CD4-positive, alpha-beta memory T cell (primary cell): ENCODE measurements at regions of chr9 and their contacts with region 1.

Region 1: DNA sequence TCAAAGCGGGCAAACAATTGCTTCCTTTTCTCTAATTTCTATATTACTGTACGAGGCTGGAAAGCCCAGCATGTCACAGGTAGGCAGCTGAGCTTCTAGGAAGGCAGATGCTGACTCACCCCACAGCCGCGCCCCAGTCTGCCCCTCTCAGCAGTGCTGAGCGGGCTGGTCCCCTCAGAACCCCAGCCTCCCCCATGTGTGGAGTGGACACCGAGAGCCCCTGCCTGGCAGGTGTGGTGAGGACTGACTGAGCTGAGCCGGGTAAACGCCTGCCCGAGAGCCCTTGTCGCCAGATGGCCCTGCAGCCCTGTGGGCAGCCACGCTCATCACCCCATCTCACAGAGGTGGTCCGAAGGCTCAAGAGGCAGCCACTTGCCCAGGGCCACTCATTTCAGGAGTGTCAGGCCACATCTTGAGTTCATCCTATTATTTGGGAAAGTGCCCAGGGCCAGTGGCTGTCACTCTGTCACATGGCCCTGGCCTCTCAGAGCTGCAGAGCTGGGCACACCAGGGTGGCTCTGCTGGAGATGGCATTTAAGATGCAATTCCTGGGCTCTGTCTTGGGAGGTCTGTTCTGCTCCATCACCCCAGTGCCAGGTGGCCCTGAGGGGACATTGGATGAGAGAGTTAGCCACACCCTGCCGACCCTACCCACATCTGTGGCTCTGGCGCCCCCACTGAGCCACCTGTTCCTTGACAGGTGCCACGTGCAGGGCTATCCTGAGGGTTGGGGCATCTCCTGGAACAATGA is 12.4 kb downstream of the CARD19 start:
- DNase-seq: peak in 1 of 5 donors; percentile 44
- H3K4me3 ChIP-seq: no peak overlapping the region
- H3K4me3 Mint-ChIP-seq: peak overlapping the region in 2 of 8 donors; percentile 22 to 63
- H3K27ac ChIP-seq: peak overlapping the region; percentile 6
- H3K27ac Mint-ChIP-seq: peak overlapping the region in 4 of 7 donors; percentile 12 to 84 (median 70)
- H3K4me1 ChIP-seq: peaks cover 52% of the 10 kb centered on the region
- H3K4me1 Mint-ChIP-seq: peaks cover 26 to 60% (median 46%) of the 10 kb centered on the region in 4 donors
- H3K27me3 ChIP-seq: no peaks in the 10 kb centered on the region
- H3K27me3 Mint-ChIP-seq: no peaks in the 10 kb centered on the region

Region 2: GRCh38 chr9:93028448-93029006 is 79.9 kb before region 1 on chr9:
- CTCF ChIA-PET with region 1: interaction called, 12 read pairs
- POLR2A ChIA-PET with region 1: interaction called, 5 read pairs
- intact Hi-C with region 1: no loop called
- DNase-seq: peak; percentile 84 to 94 (median 89)
- H3K4me3 ChIP-seq: peak overlapping the region; percentile 52 to 55
- H3K4me3 Mint-ChIP-seq: peak overlapping the region; percentile 82 to 90 (median 86)
- H3K27ac ChIP-seq: peak overlapping the region; percentile 91
- H3K27ac Mint-ChIP-seq: peak overlapping the region; percentile 94 to 99 (median 96)
- H3K4me1 ChIP-seq: peaks cover 95% of the 10 kb centered on the region
- H3K4me1 Mint-ChIP-seq: peaks cover 43 to 95% (median 78%) of the 10 kb centered on the region in 4 donors
- H3K27me3 ChIP-seq: no peaks in the 10 kb centered on the region
- H3K27me3 Mint-ChIP-seq: no peaks in the 10 kb centered on the region

Region 3: DNA sequence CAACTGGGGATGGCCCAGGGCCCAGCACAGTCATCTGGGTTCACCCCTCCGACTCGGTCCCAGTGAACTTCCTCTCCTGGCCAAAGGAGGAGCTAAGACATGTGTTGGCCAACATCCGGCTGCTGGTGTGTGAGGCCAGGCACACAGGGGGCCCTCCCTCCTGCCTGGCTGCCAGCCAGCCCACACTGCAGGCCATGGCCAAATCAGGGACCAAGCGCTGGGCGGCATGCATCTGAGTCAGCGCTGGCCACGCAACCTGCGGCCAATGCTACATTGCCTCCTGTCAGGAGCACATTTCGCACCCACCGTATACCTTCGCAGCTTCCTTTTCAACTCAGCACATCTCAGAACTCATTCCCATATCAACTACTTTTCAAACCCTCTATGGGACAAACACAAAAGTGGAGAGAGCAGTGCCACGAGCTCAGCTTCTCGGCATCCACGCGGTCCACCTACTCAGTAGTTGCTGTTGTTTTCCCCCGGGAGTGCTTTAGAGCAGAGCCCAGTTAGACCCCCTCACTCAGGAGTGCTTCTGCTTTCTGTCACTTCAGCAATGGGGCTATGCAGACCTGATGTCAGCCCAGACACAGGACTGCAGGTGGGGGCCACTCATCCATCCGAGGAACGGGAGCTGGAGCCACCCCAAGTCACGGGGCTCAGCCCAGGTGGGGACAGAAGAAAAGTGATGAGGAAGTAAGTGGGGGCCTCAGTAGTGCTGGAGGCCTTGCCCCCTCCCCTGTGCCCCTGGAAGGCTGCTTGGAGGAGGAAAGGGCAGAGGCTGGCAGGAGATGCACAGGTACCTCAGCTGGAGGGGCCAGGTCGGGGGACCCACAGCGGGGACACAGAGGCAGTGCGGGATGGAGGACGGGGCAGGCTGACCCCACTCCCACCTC is 11.7 kb after region 1 on chr9:
- CTCF ChIA-PET with region 1: interaction called, 20 read pairs
- POLR2A ChIA-PET with region 1: interaction called, 11 read pairs
- intact Hi-C with region 1: no loop called
- DNase-seq: peak in 2 of 5 donors; percentile 21 to 52
- H3K4me3 ChIP-seq: no peak overlapping the region
- H3K4me3 Mint-ChIP-seq: peak overlapping the region in 5 of 8 donors; percentile 18 to 42 (median 26)
- H3K27ac ChIP-seq: no peak overlapping the region
- H3K27ac Mint-ChIP-seq: peak overlapping the region; percentile 37 to 90 (median 81)
- H3K4me1 ChIP-seq: peaks cover 15% of the 10 kb centered on the region
- H3K4me1 Mint-ChIP-seq: peaks cover 12 to 37% (median 18%) of the 10 kb centered on the region in 4 donors
- H3K27me3 ChIP-seq: no peaks in the 10 kb centered on the region
- H3K27me3 Mint-ChIP-seq: no peaks in the 10 kb centered on the region

Region 4: GRCh38 chr9:93126151-93126781 is 17.8 kb after region 1 on chr9:
- CTCF ChIA-PET with region 1: interaction called, 20 read pairs
- POLR2A ChIA-PET with region 1: interaction called, 5 read pairs
- intact Hi-C with region 1: no loop called
- DNase-seq: peak in 1 of 5 donors; percentile 52
- H3K4me3 ChIP-seq: no peak overlapping the region
- H3K4me3 Mint-ChIP-seq: peak overlapping the region in 6 of 8 donors; percentile 16 to 86 (median 74)
- H3K27ac ChIP-seq: peak overlapping the region; percentile 55
- H3K27ac Mint-ChIP-seq: peak overlapping the region; percentile 80 to 97 (median 93)
- H3K4me1 ChIP-seq: peaks cover 55% of the 10 kb centered on the region
- H3K4me1 Mint-ChIP-seq: peaks cover 23 to 74% (median 44%) of the 10 kb centered on the region in 4 donors
- H3K27me3 ChIP-seq: no peaks in the 10 kb centered on the region
- H3K27me3 Mint-ChIP-seq: no peaks in the 10 kb centered on the region

Region 5: DNA sequence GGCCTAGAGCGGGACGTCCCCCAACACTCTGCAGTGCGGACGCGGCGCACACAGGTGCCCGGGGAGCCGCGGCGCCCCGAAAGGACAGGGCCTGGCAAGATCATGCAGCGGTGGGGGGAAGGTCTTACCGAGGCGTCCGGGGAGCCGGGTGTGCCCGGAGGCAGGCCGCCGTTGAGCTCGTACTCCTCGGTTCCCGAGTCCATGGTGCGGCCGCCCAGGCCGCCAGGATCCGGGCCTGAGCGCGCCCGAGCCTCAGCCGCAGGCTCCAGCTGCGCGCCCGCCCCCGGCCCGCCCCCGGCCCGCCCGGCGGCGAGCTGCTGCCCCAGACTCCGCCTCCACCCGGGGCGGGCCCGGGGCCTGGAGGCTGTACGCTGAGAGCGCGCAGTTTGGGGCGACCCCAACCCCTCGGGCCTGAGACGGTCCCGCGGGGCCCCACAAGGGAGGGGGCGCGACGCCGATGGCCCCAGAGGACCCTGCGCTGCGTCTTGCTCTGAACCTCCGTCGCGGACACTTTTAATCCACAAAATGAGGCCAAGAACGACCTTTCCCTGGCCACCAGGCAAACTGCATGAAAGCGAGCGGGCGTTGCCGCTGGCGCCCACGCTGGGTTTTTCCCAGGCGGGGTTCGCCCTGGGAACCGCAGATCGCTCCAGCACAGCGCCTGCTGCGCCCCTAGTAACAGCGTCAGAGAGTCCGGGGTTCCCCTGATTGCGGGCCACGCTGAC is 25.7 kb after region 1 on chr9 and contains the start of gene NINJ1:
- CTCF ChIA-PET with region 1: interaction called, 12 read pairs
- POLR2A ChIA-PET with region 1: interaction called, 13 read pairs
- intact Hi-C with region 1: no loop called
- DNase-seq: peak; percentile 87 to 96 (median 89)
- H3K4me3 ChIP-seq: peak within 1 kb of the TSS; percentile 52 to 82
- H3K4me3 Mint-ChIP-seq: peak within 1 kb of the TSS; percentile 88 to 96 (median 90)
- H3K27ac ChIP-seq: peak within 1 kb of the TSS; percentile 92
- H3K27ac Mint-ChIP-seq: peak within 1 kb of the TSS; percentile 97 to 99 (median 99)
- H3K4me1 ChIP-seq: peaks cover 48% of the 10 kb centered on the region
- H3K4me1 Mint-ChIP-seq: peaks cover 26 to 79% (median 50%) of the 10 kb centered on the region in 4 donors
- H3K27me3 ChIP-seq: no peaks in the 10 kb centered on the region
- H3K27me3 Mint-ChIP-seq: no peaks in the 10 kb centered on the region
- total RNA-seq, gene NINJ1: 31.1 to 31.3 TPM

Region 6: GRCh38 chr9:93159601-93160471 is 51.4 kb after region 1 on chr9:
- CTCF ChIA-PET with region 1: interaction called, 6 read pairs
- POLR2A ChIA-PET with region 1: no interaction called
- intact Hi-C with region 1: loop called (anchors 1 kb)
- DNase-seq: peak; percentile 45 to 58 (median 49)
- H3K4me3 ChIP-seq: no peak overlapping the region
- H3K4me3 Mint-ChIP-seq: no peak overlapping the region
- H3K27ac ChIP-seq: no peak overlapping the region
- H3K27ac Mint-ChIP-seq: peak overlapping the region in 3 of 7 donors; percentile 17 to 66 (median 43)
- H3K4me1 ChIP-seq: peaks cover 14% of the 10 kb centered on the region
- H3K4me1 Mint-ChIP-seq: peaks cover 9 to 17% (median 10%) of the 10 kb centered on the region in 4 donors
- H3K27me3 ChIP-seq: no peaks in the 10 kb centered on the region
- H3K27me3 Mint-ChIP-seq: no peaks in the 10 kb centered on the region

Region 7: DNA sequence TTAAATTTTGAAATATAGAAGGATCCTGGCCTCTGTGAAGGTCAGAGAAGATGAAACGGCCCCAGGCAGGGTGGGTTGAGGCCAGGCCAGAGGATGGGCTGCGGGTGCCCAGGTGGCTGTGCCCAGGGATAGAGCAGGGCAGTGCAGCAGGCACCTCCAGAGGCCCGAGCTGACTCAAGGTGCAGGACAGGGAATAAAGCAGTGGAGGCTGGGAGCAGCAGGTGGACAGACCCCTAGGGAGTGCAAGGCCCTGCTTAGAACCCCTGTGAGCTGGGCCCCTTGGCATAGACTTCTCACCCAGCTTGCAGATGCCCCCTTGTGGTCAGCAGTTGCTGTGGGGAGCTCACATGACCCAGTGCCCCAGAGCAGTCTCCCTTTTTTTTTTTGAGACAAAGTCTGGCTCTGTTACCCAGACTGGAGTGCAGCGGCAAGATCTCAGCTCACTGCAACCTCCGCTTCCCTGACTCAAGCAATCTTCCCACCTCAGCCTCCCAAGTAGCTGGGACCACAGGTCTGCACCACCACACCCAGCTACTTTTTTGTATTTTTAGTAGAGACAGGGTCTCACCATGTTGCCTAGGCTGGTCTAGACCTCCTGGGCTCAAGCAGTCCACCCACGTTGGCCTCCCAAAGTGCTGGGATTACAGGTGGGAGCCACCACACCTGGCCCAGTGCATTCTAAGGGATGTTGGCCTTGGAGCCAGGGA is 194.2 kb after region 1 on chr9:
- CTCF ChIA-PET with region 1: interaction called, 32 read pairs
- POLR2A ChIA-PET with region 1: interaction called, 5 read pairs
- intact Hi-C with region 1: loop called (anchors 1 kb)
- DNase-seq: peak; percentile 46 to 62 (median 57)
- H3K4me3 ChIP-seq: no peak overlapping the region
- H3K4me3 Mint-ChIP-seq: no peak overlapping the region
- H3K27ac ChIP-seq: no peak overlapping the region
- H3K27ac Mint-ChIP-seq: peak overlapping the region in 1 of 7 donors; percentile 65
- H3K4me1 ChIP-seq: no peaks in the 10 kb centered on the region
- H3K4me1 Mint-ChIP-seq: peaks cover 0 to 4% (median 0%) of the 10 kb centered on the region in 4 donors
- H3K27me3 ChIP-seq: no peaks in the 10 kb centered on the region
- H3K27me3 Mint-ChIP-seq: no peaks in the 10 kb centered on the region